ENCODE measurements at regions of chr11 and their contacts with region 1.

Region 1: DNA sequence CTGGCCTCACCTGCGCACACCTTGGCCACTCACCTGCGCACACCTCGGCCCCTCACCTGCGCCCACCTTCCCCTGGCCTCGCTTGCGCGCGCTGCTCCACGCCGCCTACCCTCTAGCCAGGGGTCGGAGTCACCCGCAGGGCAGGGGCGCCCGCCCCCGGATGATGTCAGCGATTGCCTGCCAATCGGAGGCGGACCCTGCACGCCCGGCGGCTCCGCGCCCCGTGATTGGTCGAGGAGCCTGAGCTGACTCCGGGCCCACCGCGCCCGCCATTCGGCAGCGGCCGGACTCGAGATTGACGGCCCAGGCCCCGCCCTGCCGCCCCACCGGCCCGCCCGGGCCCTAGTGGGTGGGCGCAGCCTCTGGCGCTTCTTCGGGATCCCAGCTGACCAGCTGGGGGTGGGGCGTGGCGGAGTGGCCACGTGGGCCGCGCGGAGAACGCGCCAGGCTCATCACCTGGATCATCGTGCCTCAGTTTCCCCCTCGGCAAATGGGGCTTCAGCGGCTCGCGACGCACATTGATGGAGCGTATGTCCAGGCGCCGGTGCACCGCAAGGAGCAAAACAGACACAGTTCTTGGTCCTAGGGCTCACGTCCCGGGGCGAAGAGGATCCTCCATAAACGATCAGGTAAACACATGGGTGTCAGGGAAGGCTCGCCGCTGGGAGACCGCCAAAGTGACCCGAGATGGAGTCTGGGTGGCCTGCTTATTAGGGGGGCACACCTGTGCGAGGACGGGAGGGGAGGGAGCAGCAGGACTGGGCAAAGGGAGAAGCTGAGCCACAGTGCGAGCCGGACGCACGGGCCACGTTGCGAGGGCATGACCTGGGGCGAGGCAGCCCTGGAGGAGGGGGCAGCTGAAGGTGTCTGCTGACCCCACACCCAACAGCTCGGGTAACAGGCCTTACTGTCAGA is at the start of gene DHCR7:
- DNase-seq: peak; percentile 97
- ATAC-seq: peak; percentile 89
- H3K4me3 Mint-ChIP-seq: peak within 1 kb of the TSS; percentile 88
- H3K27ac Mint-ChIP-seq: peak within 1 kb of the TSS; percentile 90
- H3K4me1 Mint-ChIP-seq: peaks cover 43% of the 10 kb centered on the region
- H3K27me3 Mint-ChIP-seq: no peaks in the 10 kb centered on the region
- total RNA-seq, gene DHCR7: 57.3 to 64.0 TPM

Region 2: DNA sequence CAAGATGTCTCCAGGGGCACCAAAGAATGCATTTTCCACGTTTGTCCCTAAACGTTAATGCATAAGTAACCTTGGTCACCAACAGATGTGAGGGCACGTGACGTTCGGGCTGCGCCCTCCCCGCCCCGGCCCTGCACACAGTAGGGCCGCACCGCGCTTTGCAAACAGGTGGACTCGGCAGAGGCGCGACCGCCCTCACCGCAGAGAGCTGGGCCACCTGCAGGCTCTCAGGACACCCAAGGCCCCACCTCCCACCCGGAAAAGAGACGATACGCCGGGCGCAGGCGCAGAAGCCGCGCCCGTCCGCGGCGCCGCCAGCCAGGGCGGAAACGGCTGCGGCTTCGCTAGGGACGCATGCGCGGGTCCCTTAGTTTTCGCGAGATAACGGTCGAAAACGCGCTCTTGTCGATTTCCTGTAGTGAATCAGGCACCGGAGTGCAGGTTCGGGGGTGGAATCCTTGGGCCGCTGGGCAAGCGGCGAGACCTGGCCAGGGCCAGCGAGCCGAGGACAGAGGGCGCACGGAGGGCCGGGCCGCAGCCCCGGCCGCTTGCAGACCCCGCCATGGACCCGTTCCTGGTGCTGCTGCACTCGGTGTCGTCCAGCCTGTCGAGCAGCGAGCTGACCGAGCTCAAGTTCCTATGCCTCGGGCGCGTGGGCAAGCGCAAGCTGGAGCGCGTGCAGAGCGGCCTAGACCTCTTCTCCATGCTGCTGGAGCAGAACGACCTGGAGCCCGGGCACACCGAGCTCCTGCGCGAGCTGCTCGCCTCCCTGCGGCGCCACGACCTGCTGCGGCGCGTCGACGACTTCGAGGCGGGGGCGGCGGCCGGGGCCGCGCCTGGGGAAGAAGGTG is 1245.4 kb before region 1 on chr11 and contains the start of gene FADD:
- CTCF ChIA-PET with region 1: no interaction called
- POLR2A ChIA-PET with region 1: no interaction called
- intact Hi-C with region 1: loop called in 1 of 2 experiments (anchors 1 kb)
- DNase-seq: peak; percentile 95
- ATAC-seq: peak; percentile 68
- H3K4me3 Mint-ChIP-seq: peak within 1 kb of the TSS; percentile 97
- H3K27ac Mint-ChIP-seq: peak within 1 kb of the TSS; percentile 99
- H3K4me1 Mint-ChIP-seq: peaks cover 41% of the 10 kb centered on the region
- H3K27me3 Mint-ChIP-seq: peaks cover 2% of the 10 kb centered on the region
- total RNA-seq, gene FADD: 23.5 to 32.4 TPM

Region 3: GRCh38 chr11:70397983-70398833 is 1050.3 kb before region 1 on chr11 and contains the start of gene CTTN:
- CTCF ChIA-PET with region 1: interaction called, 3 read pairs
- POLR2A ChIA-PET with region 1: no interaction called
- intact Hi-C with region 1: loop called in 1 of 2 experiments (anchors 10 kb)
- DNase-seq: peak; percentile 84
- ATAC-seq: peak; percentile 71
- H3K4me3 Mint-ChIP-seq: peak within 1 kb of the TSS; percentile 88
- H3K27ac Mint-ChIP-seq: peak within 1 kb of the TSS; percentile 89
- H3K4me1 Mint-ChIP-seq: peaks cover 30% of the 10 kb centered on the region
- H3K27me3 Mint-ChIP-seq: peaks cover 20% of the 10 kb centered on the region
- total RNA-seq, gene CTTN: 40.9 to 41.1 TPM

Region 4: DNA sequence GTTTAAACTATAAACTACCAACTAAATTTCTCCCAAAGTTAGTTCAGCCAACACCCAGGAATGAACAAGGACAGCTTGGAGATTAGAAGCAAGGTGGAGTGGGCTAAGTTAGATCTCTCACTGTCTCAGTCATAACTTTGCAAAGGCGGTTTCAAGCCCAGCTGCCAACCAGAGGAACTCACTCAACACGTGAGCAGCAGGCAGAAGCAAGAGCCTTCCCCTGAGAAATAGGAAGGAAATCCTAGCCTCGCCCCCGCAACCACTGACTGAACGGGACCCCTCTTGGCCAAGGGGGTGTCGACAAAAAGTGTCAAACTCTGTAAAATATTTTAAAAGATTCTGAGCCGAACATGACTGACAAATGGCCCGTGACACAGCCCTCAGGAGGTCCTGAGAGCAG is 95.4 kb after region 1 on chr11:
- CTCF ChIA-PET with region 1: no interaction called
- POLR2A ChIA-PET with region 1: no interaction called
- intact Hi-C with region 1: loop called in 1 of 2 experiments (anchors 5 kb)
- DNase-seq: peak; percentile 17
- ATAC-seq: no peak
- H3K4me3 Mint-ChIP-seq: no peak overlapping the region
- H3K27ac Mint-ChIP-seq: no peak overlapping the region
- H3K4me1 Mint-ChIP-seq: peaks cover 22% of the 10 kb centered on the region
- H3K27me3 Mint-ChIP-seq: peaks cover 19% of the 10 kb centered on the region

Region 5: GRCh38 chr11:71568435-71569349 is 120.2 kb after region 1 on chr11:
- CTCF ChIA-PET with region 1: no interaction called
- POLR2A ChIA-PET with region 1: no interaction called
- intact Hi-C with region 1: no loop called
- DNase-seq: no peak
- ATAC-seq: no peak
- H3K4me3 Mint-ChIP-seq: no peak overlapping the region
- H3K27ac Mint-ChIP-seq: no peak overlapping the region
- H3K4me1 Mint-ChIP-seq: no peaks in the 10 kb centered on the region
- H3K27me3 Mint-ChIP-seq: peaks cover 29% of the 10 kb centered on the region

Region 6: GRCh38 chr11:71928737-71929452 is 480.4 kb after region 1 on chr11 and contains the start of gene RNF121:
- CTCF ChIA-PET with region 1: no interaction called
- POLR2A ChIA-PET with region 1: no interaction called
- intact Hi-C with region 1: loop called in 1 of 2 experiments (anchors 1 kb)
- DNase-seq: peak; percentile 99
- ATAC-seq: peak; percentile 87
- H3K4me3 Mint-ChIP-seq: peak within 1 kb of the TSS; percentile 96
- H3K27ac Mint-ChIP-seq: peak within 1 kb of the TSS; percentile 100
- H3K4me1 Mint-ChIP-seq: peaks cover 50% of the 10 kb centered on the region
- H3K27me3 Mint-ChIP-seq: no peaks in the 10 kb centered on the region
- total RNA-seq, gene RNF121: 28.7 to 29.5 TPM

Region 7: GRCh38 chr11:72112321-72113219 is 664.1 kb after region 1 on chr11 and contains the start of gene ANAPC15:
- CTCF ChIA-PET with region 1: no interaction called
- POLR2A ChIA-PET with region 1: no interaction called
- intact Hi-C with region 1: loop called in 1 of 2 experiments (anchors 1 kb)
- DNase-seq: peak; percentile 100
- ATAC-seq: peak; percentile 89
- H3K4me3 Mint-ChIP-seq: peak within 1 kb of the TSS; percentile 92
- H3K27ac Mint-ChIP-seq: peak within 1 kb of the TSS; percentile 98
- H3K4me1 Mint-ChIP-seq: peaks cover 16% of the 10 kb centered on the region
- H3K27me3 Mint-ChIP-seq: no peaks in the 10 kb centered on the region
- total RNA-seq, gene ANAPC15: 60.3 to 76.1 TPM